ENCODE measurements at regions of chr7 and their contacts with region 1.

Region 1: GRCh38 chr7:1175967-1176851 is 16.2 kb upstream of the ZFAND2A start:
- DNase-seq: peak; percentile 56 to 81 (median 73)
- H3K4me3 ChIP-seq: peak overlapping the region; percentile 42
- H3K4me3 Mint-ChIP-seq: peak overlapping the region in 6 of 7 donors; percentile 53 to 81 (median 69)
- H3K27ac ChIP-seq: no peak overlapping the region
- H3K27ac Mint-ChIP-seq: peak overlapping the region in 2 of 8 donors; percentile 12 to 78
- H3K4me1 ChIP-seq: peaks cover 15% of the 10 kb centered on the region
- H3K4me1 Mint-ChIP-seq: peaks cover 8 to 13% (median 11%) of the 10 kb centered on the region in 3 donors
- H3K27me3 ChIP-seq: peaks cover 4% of the 10 kb centered on the region
- H3K27me3 Mint-ChIP-seq: peaks cover 15 to 23% of the 10 kb centered on the region in 2 donors

Region 2: DNA sequence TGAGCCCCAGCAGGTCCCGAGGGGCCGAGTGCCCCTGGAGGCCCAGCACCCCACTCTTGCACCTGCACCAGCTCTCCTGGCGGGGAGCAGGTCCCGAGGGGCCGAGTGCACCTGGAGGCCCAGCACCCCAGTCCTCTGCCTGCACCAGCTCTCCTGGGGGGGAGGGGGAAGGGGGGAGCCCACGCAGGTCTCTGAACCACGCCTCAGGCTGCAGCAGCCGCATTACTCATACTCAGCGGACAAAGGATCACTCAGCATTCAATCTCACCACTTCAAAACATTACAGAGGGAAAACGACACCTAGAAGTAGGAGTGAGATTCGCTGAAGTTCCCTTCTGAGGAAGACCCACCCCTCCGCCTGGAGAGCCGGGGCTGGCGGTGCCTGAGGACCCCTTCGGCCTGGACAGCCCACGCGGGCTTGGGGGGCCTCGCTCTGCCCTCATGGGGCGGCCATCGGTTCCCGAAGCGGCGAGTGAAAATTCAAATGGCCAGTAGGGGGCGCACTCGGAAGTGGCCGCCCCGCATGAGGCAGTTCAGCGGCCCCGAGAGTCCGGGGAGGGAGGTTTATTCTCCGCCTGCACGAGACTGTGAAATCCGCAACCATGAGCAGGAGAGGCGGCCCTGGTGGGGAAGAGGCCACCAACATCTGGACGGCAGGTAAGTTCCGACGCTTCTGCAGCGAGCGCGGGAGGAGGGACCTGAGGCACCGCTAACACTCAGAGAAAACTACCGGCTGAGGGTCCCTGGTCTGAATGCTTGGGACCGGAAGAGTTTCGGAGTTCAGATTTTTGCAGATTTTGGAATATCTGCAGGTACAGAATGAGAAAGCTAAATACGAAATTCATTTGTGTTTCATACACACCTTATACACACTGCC is 89.4 kb before region 1 on chr7:
- CTCF ChIA-PET with region 1: interaction called, 26 read pairs
- POLR2A ChIA-PET with region 1: no interaction called
- DNase-seq: peak; percentile 58 to 78 (median 65)
- H3K4me3 ChIP-seq: peak overlapping the region; percentile 47
- H3K4me3 Mint-ChIP-seq: peak overlapping the region in 6 of 7 donors; percentile 67 to 77 (median 72)
- H3K27ac ChIP-seq: no peak overlapping the region
- H3K27ac Mint-ChIP-seq: peak overlapping the region in 3 of 8 donors; percentile 29 to 56 (median 55)
- H3K4me1 ChIP-seq: peaks cover 11% of the 10 kb centered on the region
- H3K4me1 Mint-ChIP-seq: peaks cover 6 to 13% (median 7%) of the 10 kb centered on the region in 3 donors
- H3K27me3 ChIP-seq: no peaks in the 10 kb centered on the region
- H3K27me3 Mint-ChIP-seq: no peaks in the 10 kb centered on the region

Region 3: DNA sequence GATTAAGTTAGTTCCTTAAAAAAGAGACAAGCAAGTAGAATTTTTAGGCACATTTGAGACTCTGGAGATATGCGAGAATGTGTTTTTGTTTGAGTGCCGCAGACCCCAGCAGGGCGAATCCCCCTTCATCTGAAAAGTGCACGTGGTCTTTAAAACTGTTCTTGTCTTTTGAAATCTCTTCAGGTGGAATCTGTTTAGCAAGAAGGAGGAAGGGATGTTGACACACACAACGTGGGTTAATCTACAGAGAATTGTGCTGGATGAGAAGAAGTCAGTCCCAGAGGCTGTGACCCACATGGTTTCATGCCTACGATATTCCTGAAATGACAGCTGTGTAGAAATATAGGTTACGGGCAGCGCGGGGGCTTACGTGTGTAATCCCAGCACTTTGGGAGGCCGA is 10.9 kb after region 1 on chr7:
- CTCF ChIA-PET with region 1: interaction called, 15 read pairs
- POLR2A ChIA-PET with region 1: no interaction called
- DNase-seq: no peak
- H3K4me3 ChIP-seq: no peak overlapping the region
- H3K4me3 Mint-ChIP-seq: no peak overlapping the region
- H3K27ac ChIP-seq: no peak overlapping the region
- H3K27ac Mint-ChIP-seq: no peak overlapping the region
- H3K4me1 ChIP-seq: peaks cover 7% of the 10 kb centered on the region
- H3K4me1 Mint-ChIP-seq: peaks cover under 1 to 5% (median 2%) of the 10 kb centered on the region in 3 donors
- H3K27me3 ChIP-seq: peaks cover 4% of the 10 kb centered on the region
- H3K27me3 Mint-ChIP-seq: peaks cover 20 to 52% of the 10 kb centered on the region in 2 donors

Region 4: GRCh38 chr7:1192171-1192676 is 16.0 kb after region 1 on chr7:
- CTCF ChIA-PET with region 1: interaction called, 15 read pairs
- POLR2A ChIA-PET with region 1: no interaction called
- DNase-seq: no peak
- H3K4me3 ChIP-seq: no peak overlapping the region
- H3K4me3 Mint-ChIP-seq: peak overlapping the region in 2 of 7 donors; percentile 9 to 11
- H3K27ac ChIP-seq: no peak overlapping the region
- H3K27ac Mint-ChIP-seq: peak overlapping the region in 5 of 8 donors; percentile 16 to 68 (median 50)
- H3K4me1 ChIP-seq: peaks cover 3% of the 10 kb centered on the region
- H3K4me1 Mint-ChIP-seq: peaks cover 4 to 9% (median 5%) of the 10 kb centered on the region in 3 donors
- H3K27me3 ChIP-seq: peaks cover 3% of the 10 kb centered on the region
- H3K27me3 Mint-ChIP-seq: peaks cover 12 to 28% of the 10 kb centered on the region in 2 donors

Region 5: GRCh38 chr7:1251796-1252545 is 75.8 kb after region 1 on chr7:
- CTCF ChIA-PET with region 1: no interaction called
- POLR2A ChIA-PET with region 1: no interaction called
- DNase-seq: no peak
- H3K4me3 ChIP-seq: no peak overlapping the region
- H3K4me3 Mint-ChIP-seq: no peak overlapping the region
- H3K27ac ChIP-seq: no peak overlapping the region
- H3K27ac Mint-ChIP-seq: no peak overlapping the region
- H3K4me1 ChIP-seq: peaks cover 10% of the 10 kb centered on the region
- H3K4me1 Mint-ChIP-seq: peaks cover 6 to 13% (median 7%) of the 10 kb centered on the region in 3 donors
- H3K27me3 ChIP-seq: peaks cover 22% of the 10 kb centered on the region
- H3K27me3 Mint-ChIP-seq: peaks cover 41 to 54% of the 10 kb centered on the region in 2 donors